ENCODE measurements at regions of chr2 and their contacts with region 1.

Region 1: GRCh38 chr2:169397697-169398096 is 35.4 kb upstream of the LRP2 start:
- DNase-seq: peak in 1 of 2 experiments; percentile 48
- H3K4me3 ChIP-seq: no peak overlapping the region
- H3K4me3 Mint-ChIP-seq: no peak overlapping the region
- H3K27ac Mint-ChIP-seq: no peak overlapping the region
- H3K4me1 ChIP-seq: peaks cover 35% of the 10 kb centered on the region
- H3K4me1 Mint-ChIP-seq: peaks cover 30% of the 10 kb centered on the region
- H3K27me3 ChIP-seq: no peaks in the 10 kb centered on the region
- H3K27me3 Mint-ChIP-seq: peaks cover 3% of the 10 kb centered on the region
- CTCF ChIP-seq: peak; percentile 61 to 64

Region 2: GRCh38 chr2:168948621-168949212 is 449.0 kb before region 1 on chr2:
- CTCF ChIA-PET with region 1: no interaction called
- POLR2A ChIA-PET with region 1: no interaction called
- intact Hi-C with region 1: loop called (anchors 5 kb)
- DNase-seq: peak in 1 of 2 experiments; percentile 24
- H3K4me3 ChIP-seq: no peak overlapping the region
- H3K4me3 Mint-ChIP-seq: no peak overlapping the region
- H3K27ac Mint-ChIP-seq: no peak overlapping the region
- H3K4me1 ChIP-seq: no peaks in the 10 kb centered on the region
- H3K4me1 Mint-ChIP-seq: no peaks in the 10 kb centered on the region
- H3K27me3 ChIP-seq: no peaks in the 10 kb centered on the region
- H3K27me3 Mint-ChIP-seq: peaks cover 16% of the 10 kb centered on the region
- CTCF ChIP-seq: peak; percentile 49

Region 3: DNA sequence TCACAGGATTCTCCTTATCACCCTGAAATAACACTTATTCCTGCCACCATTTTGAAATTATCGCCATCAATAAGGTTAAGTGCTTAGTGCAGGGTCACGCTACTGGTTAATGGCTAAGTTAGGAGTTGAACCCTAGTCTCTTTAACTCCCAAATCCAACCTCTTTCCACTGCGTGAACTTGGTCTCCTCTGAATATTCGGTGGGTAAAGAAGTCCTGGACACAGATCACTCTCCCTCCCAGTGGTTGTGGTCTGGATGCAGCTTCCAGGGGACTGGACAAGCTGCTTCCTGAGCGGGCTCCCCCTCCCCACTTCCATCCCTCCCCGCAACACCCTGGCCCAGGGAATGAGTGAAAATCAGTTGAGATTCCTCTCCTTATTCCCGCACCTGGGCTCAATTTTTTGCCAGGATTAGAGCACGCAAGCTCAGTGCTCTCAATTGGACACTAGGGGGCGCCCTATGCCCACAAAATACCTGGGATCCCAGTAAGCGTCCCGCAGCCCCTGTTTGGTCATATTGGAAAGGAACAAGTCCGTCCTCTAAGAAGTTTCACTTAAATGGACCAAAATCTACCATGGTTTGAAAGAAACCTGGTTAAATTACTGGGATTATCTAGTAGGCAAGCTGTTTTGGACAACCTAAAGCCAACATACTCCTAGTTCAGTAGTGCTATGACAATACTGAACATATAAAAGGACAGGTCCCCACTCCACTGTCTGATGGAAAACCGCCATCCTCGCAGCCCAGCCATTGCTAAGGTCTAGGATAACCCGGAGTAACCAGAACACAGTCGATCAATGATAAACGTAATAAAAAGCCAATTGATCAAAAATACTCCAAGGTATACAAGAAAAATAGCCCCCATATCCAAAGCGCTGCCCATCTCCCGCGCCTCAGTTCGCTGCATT is 287.9 kb before region 1 on chr2:
- CTCF ChIA-PET with region 1: interaction called, 16 read pairs
- POLR2A ChIA-PET with region 1: no interaction called
- intact Hi-C with region 1: loop called (anchors 1 kb)
- DNase-seq: peak; percentile 82 to 86
- H3K4me3 ChIP-seq: no peak overlapping the region
- H3K4me3 Mint-ChIP-seq: no peak overlapping the region
- H3K27ac Mint-ChIP-seq: no peak overlapping the region
- H3K4me1 ChIP-seq: peaks cover 5% of the 10 kb centered on the region; the same call in 1 of the 2 replicates
- H3K4me1 Mint-ChIP-seq: peaks cover 10% of the 10 kb centered on the region
- H3K27me3 ChIP-seq: no peaks in the 10 kb centered on the region; the same call in 1 of the 2 replicates
- H3K27me3 Mint-ChIP-seq: peaks cover 4% of the 10 kb centered on the region
- CTCF ChIP-seq: peak; percentile 89 to 94

Region 4: DNA sequence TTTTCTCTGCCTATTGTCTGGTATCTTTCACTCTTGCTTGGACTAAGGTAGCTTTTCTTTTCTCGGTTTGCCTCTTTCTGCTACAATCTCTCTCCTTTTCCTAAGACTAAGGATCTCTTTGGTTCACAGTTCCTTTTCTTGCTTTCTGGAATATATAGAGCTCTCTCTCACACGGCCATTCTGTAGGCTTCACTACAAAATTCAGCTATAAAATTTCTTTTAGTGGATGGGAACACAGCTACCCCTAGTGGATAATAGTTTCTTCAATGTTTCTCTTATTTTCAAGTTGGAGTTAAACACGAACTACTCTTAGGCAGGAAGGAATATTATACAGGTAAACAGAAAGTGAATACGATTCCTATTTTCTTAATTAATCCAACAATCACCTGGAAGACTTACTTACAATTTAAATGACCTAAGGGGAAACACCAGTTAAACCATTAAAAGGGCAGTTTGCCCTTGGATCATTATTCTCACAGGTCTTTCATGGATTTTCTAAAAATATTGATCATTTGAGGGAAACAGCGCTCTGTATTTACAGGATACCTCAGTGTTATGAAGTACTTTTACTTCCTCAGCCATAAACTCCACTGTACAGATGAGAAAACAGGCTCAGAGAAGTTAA is 175.8 kb before region 1 on chr2:
- CTCF ChIA-PET with region 1: interaction called, 7 read pairs
- POLR2A ChIA-PET with region 1: no interaction called
- intact Hi-C with region 1: loop called (anchors 2 kb)
- DNase-seq: no peak
- H3K4me3 ChIP-seq: no peak overlapping the region
- H3K4me3 Mint-ChIP-seq: no peak overlapping the region
- H3K27ac Mint-ChIP-seq: no peak overlapping the region
- H3K4me1 ChIP-seq: no peaks in the 10 kb centered on the region
- H3K4me1 Mint-ChIP-seq: no peaks in the 10 kb centered on the region
- H3K27me3 ChIP-seq: no peaks in the 10 kb centered on the region
- H3K27me3 Mint-ChIP-seq: no peaks in the 10 kb centered on the region
- CTCF ChIP-seq: peak; percentile 37 to 44

Region 5: DNA sequence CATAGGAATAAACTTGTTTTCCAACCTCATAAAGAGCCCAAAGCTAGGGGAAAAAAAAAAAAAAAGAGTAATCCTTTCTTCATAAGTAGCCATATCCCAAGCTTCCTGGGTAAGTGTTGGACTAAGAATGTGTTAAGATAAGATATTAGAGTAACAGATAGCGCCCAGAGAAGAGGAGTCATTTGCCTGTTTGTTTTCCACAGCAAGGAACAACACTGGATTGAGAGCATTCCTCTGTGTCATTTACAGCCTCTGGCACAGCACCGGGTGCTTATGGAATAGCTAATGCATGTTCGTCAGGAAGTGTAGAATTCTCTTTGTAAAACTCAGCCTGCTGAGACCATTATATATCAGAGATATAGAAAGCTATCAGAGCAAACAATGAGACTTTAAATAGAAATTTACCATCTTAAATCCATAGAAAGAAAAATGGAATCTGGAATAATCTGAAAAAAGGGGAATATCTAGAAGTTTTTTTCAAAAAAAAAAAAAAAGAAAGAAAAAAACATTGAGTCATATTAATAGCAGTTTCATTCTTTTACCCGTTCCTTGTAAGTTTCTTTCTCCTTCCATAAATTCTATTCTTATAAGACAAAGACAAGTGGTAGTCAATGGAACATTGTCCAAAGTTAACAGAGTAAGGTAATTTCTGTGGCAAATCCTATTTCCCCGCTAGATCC is 73.0 kb before region 1 on chr2:
- CTCF ChIA-PET with region 1: interaction called, 9 read pairs
- POLR2A ChIA-PET with region 1: interaction called, 3 read pairs
- intact Hi-C with region 1: loop called (anchors 1 kb)
- DNase-seq: peak; percentile 66 to 81
- H3K4me3 ChIP-seq: no peak overlapping the region
- H3K4me3 Mint-ChIP-seq: peak overlapping the region; percentile 39
- H3K27ac Mint-ChIP-seq: peak overlapping the region; percentile 68
- H3K4me1 ChIP-seq: peaks cover 36% of the 10 kb centered on the region
- H3K4me1 Mint-ChIP-seq: peaks cover 26% of the 10 kb centered on the region
- H3K27me3 ChIP-seq: no peaks in the 10 kb centered on the region
- H3K27me3 Mint-ChIP-seq: no peaks in the 10 kb centered on the region
- CTCF ChIP-seq: no peak

Region 6: DNA sequence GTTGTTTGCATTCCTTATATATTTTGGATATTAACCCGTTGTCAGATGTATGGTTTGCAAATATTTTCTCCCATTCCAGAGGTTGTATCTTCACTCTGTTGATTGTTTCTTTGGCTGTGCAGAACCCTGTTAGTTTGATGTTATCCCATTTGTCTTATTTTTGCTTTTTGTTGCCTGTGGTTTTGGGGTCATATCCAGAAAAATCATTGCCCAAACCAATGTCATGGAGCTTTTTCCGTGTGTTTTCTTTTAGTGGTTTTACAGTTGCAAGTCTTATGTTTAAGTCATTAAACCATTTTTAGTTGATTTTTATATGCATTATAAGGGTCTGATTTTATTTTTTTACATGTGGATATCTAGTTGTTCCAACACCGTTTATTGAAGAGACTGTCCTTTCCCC is 222.2 kb after region 1 on chr2:
- CTCF ChIA-PET with region 1: no interaction called
- POLR2A ChIA-PET with region 1: no interaction called
- intact Hi-C with region 1: no loop called
- DNase-seq: no peak
- H3K4me3 ChIP-seq: no peak overlapping the region
- H3K4me3 Mint-ChIP-seq: no peak overlapping the region
- H3K27ac Mint-ChIP-seq: no peak overlapping the region
- H3K4me1 ChIP-seq: no peaks in the 10 kb centered on the region
- H3K4me1 Mint-ChIP-seq: no peaks in the 10 kb centered on the region
- H3K27me3 ChIP-seq: no peaks in the 10 kb centered on the region
- H3K27me3 Mint-ChIP-seq: no peaks in the 10 kb centered on the region
- CTCF ChIP-seq: no peak

Region 7: GRCh38 chr2:169743549-169743948 is 345.9 kb after region 1 on chr2:
- CTCF ChIA-PET with region 1: no interaction called
- POLR2A ChIA-PET with region 1: no interaction called
- intact Hi-C with region 1: no loop called
- DNase-seq: no peak
- H3K4me3 ChIP-seq: no peak overlapping the region
- H3K4me3 Mint-ChIP-seq: no peak overlapping the region
- H3K27ac Mint-ChIP-seq: no peak overlapping the region
- H3K4me1 ChIP-seq: no peaks in the 10 kb centered on the region
- H3K4me1 Mint-ChIP-seq: no peaks in the 10 kb centered on the region
- H3K27me3 ChIP-seq: no peaks in the 10 kb centered on the region
- H3K27me3 Mint-ChIP-seq: no peaks in the 10 kb centered on the region
- CTCF ChIP-seq: no peak

Measured in Caco-2 (cell line).